ENCODE measurements at regions of chr11 and their contacts with region 1.

Region 1: DNA sequence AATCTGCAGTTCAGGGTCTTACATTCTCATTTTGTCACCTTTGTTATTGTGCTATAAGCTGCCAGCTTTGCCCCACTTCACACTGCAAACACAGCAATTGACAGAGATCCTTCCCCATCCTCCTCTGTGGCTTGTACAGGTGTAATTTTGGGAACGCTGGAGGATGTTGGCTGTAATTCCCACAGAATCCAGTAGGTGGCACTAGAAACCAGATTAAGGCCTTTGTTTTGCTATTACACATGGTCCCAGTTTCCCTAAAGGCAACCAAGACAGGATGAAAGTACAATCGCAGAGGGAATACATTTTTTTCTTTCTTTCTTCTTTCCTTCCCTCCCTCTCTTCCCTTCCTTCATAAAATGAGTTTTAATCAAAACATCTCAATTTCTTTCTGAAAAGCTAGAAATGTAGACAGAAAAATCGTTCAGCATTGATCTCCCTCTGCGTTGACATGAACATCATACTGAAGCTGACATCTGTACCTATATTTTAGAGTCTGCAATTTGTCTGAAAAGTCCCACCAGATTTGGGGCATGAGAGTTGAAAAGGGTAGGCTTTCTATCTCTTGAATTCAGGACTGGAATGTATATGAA is 21.3 kb upstream of the NELL1 start:
- DNase-seq: peak; percentile 44
- ATAC-seq: no peak
- H3K4me3 Mint-ChIP-seq: no peak overlapping the region
- H3K27ac Mint-ChIP-seq: no peak overlapping the region
- H3K4me1 Mint-ChIP-seq: no peaks in the 10 kb centered on the region
- H3K27me3 Mint-ChIP-seq: no peaks in the 10 kb centered on the region

Region 2: GRCh38 chr11:20415432-20415831 is 232.6 kb before region 1 on chr11:
- CTCF ChIA-PET with region 1: no interaction called
- DNase-seq: no peak
- ATAC-seq: no peak
- H3K4me3 Mint-ChIP-seq: no peak overlapping the region
- H3K27ac Mint-ChIP-seq: no peak overlapping the region
- H3K4me1 Mint-ChIP-seq: peaks cover 9% of the 10 kb centered on the region
- H3K27me3 Mint-ChIP-seq: no peaks in the 10 kb centered on the region

Region 3: DNA sequence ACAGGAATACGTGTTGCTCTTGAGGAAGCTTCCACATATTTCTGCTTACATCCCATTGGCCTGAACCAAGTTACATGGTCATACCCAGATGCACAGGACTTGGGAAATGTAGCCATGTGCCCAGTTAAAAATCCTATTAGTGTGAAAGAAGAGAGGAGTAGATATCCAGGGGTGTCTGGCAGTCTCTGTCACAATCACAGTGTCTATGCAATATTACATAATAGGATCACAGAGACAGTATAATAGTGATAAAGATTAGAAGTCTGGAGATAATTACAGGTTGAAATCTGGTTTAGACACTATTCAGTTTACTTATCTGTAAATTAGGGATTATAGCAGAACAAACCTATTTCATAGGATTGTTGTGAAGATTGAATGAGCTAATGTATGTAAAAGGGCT is 111.3 kb before region 1 on chr11:
- CTCF ChIA-PET with region 1: no interaction called
- DNase-seq: no peak
- ATAC-seq: no peak
- H3K4me3 Mint-ChIP-seq: no peak overlapping the region
- H3K27ac Mint-ChIP-seq: no peak overlapping the region
- H3K4me1 Mint-ChIP-seq: no peaks in the 10 kb centered on the region
- H3K27me3 Mint-ChIP-seq: peaks cover 17% of the 10 kb centered on the region

Region 4: GRCh38 chr11:20618083-20618482 is 30.0 kb before region 1 on chr11:
- CTCF ChIA-PET with region 1: no interaction called
- DNase-seq: no peak
- ATAC-seq: no peak
- H3K4me3 Mint-ChIP-seq: no peak overlapping the region
- H3K27ac Mint-ChIP-seq: no peak overlapping the region
- H3K4me1 Mint-ChIP-seq: no peaks in the 10 kb centered on the region
- H3K27me3 Mint-ChIP-seq: peaks cover 13% of the 10 kb centered on the region

Region 5: GRCh38 chr11:20671856-20672546 is 23.9 kb after region 1 on chr11:
- CTCF ChIA-PET with region 1: interaction called, 15 read pairs
- DNase-seq: no peak
- ATAC-seq: no peak
- H3K4me3 Mint-ChIP-seq: no peak overlapping the region
- H3K27ac Mint-ChIP-seq: no peak overlapping the region
- H3K4me1 Mint-ChIP-seq: peaks cover 6% of the 10 kb centered on the region
- H3K27me3 Mint-ChIP-seq: peaks cover 55% of the 10 kb centered on the region